Right cardiac atrium (tissue), 5 donors: ENCODE measurements at regions of chr2 and their contacts with region 1.

Region 1: GRCh38 chr2:26577434-26578112 is 63.6 kb downstream of the CIB4 start:
- DNase-seq: peak; percentile 66 to 85 (median 83)
- ATAC-seq: peak; percentile 68 to 80
- H3K4me3 ChIP-seq: no peak overlapping the region
- H3K27ac ChIP-seq: no peak overlapping the region
- H3K4me1 ChIP-seq: no peaks in the 10 kb centered on the region
- H3K27me3 ChIP-seq: no peaks in the 10 kb centered on the region

Region 2: GRCh38 chr2:26345545-26346453 is 231.8 kb before region 1 on chr2 and contains the start of gene SELENOI:
- intact Hi-C with region 1: no loop called
- DNase-seq: peak; percentile 98 to 99 (median 99)
- ATAC-seq: peak; percentile 99
- H3K4me3 ChIP-seq: peak within 1 kb of the TSS; percentile 87
- H3K27ac ChIP-seq: peak within 1 kb of the TSS; percentile 95
- H3K4me1 ChIP-seq: peaks cover 5% of the 10 kb centered on the region
- H3K27me3 ChIP-seq: no peaks in the 10 kb centered on the region
- total RNA-seq, gene SELENOI: 14.3 to 20.2 (median 16.6) TPM

Region 3: DNA sequence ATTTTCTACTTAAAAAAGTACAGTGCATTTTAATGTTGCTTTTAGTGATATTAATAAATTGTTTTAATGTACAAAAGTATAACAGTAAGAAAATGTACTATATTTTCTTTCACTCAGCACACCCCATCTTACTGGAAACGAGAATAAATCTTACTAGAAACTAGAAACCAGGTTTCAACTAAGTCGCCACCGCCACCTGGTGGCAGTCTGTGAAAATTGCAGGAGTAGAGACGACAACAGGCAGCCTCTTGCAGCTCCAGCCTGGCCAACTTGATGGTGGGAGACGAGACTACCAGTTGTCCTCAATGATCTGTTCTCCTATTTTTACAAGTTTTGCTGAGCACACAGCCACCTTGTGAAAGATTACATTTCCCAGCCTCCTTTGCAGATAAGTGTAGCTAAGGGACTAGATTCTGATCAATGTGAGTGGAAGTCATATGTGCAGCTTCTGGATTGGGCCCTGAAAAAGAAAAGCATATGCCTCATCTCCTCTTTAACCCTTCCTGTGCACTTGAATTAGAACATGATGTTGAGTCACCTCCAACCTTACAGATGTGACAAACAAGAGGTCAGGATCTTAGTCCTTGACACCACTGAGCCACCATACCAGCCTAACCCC is 108.4 kb before region 1 on chr2:
- intact Hi-C with region 1: no loop called
- DNase-seq: peak in 2 of 3 donors; percentile 22 to 66
- ATAC-seq: no peak
- H3K4me3 ChIP-seq: no peak overlapping the region
- H3K27ac ChIP-seq: no peak overlapping the region
- H3K4me1 ChIP-seq: no peaks in the 10 kb centered on the region
- H3K27me3 ChIP-seq: no peaks in the 10 kb centered on the region

Region 4: DNA sequence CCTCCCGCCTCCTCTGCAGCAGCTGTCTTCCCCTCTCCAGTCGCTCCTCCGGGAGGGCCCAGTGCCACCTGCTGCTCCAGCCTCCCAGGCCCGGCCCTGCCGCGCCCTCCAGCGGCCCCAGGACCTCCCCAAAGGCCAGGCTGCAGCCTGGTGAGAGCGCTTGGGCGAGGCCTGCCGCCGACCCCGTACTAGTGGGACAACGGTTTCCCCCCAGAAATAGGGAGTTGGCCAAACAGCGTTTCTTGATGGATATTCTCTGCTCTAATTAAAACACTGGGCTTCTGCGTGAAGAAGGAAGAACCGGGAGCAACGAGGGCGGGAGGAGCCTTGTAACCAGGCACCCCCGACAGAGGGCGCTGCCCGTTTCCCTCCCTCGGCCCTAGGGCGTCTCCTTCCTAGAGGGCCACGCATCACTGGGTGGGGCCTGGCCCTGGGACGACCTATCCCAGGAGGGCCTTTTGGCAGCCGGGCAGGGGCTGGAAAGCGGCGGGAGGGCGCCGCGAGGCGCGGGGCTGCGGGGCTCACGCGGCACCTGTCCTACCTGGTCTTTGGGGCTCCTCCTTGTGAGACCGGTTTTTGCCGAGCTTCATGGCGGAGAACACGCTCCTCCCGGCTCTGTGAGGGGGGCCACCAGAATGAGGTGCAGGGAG is 74.2 kb before region 1 on chr2:
- intact Hi-C with region 1: loop called in 2 of 4 experiments (anchors 5 to 10 kb)
- DNase-seq: peak; percentile 70 to 91 (median 89)
- ATAC-seq: peak; percentile 93 to 94
- H3K4me3 ChIP-seq: peak overlapping the region; percentile 29
- H3K27ac ChIP-seq: no peak overlapping the region
- H3K4me1 ChIP-seq: no peaks in the 10 kb centered on the region
- H3K27me3 ChIP-seq: no peaks in the 10 kb centered on the region

Region 5: DNA sequence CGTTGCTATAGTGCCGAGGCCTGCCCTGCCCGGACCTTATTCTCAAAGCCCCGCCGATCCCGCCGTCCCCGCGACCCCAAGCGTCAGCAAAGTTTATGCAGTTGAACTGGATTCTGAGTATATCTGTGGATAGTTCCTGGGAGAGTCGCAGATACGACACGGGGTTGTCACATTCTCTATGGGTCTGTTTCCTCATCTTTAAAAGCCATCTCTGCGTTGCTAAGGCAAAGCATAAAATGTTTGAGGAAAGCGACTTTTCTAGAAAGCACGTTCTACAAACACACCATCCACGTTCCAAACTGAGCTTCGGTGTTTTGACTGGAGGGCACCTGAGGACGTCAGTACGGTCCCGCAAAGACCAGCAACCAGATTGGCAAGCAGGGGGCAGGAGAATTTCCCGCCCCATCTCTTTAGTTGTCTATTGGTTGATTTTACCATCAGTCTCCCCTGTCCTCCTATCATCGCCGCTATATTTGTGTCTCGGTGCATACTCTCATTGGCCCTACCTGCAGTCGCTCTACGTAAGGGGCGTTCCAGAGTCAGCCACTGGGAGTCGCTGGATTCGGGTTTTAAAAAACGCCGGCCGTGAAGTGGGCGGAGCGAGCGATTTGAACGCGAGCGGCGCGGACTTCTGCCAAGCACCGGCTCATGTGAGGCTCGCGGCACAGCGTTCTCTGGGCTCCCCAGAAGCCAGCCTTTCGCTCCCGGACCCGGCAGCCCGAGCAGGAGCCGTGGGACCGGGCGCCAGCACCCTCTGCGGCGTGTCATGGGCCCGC is 208.0 kb after region 1 on chr2 and contains the start of gene CENPA:
- intact Hi-C with region 1: no loop called
- DNase-seq: peak; percentile 97 to 99 (median 98)
- ATAC-seq: peak; percentile 99
- H3K4me3 ChIP-seq: peak within 1 kb of the TSS; percentile 90
- H3K27ac ChIP-seq: no peak within 1 kb of the TSS
- H3K4me1 ChIP-seq: no peaks in the 10 kb centered on the region
- H3K27me3 ChIP-seq: no peaks in the 10 kb centered on the region
- total RNA-seq, gene CENPA: 0.71 to 0.91 TPM in 2 of 4 donors, not detected in the others